Activated T-helper 1 cell treated with anti-CD3 and anti-CD28 coated beads, Interleukin-12 subunit alpha, Interleukin-12 subunit beta, Interleukin-2, Interleukin-4 antibody, amounts not matched to agents 30 ng/mL and 10 ng/mL and 1 ng/mL, durations not matched to agents 14 hours and 24 hours and 36 hours (primary cell): ENCODE measurements at regions of chr1 and their contacts with region 1.

Region 1: DNA sequence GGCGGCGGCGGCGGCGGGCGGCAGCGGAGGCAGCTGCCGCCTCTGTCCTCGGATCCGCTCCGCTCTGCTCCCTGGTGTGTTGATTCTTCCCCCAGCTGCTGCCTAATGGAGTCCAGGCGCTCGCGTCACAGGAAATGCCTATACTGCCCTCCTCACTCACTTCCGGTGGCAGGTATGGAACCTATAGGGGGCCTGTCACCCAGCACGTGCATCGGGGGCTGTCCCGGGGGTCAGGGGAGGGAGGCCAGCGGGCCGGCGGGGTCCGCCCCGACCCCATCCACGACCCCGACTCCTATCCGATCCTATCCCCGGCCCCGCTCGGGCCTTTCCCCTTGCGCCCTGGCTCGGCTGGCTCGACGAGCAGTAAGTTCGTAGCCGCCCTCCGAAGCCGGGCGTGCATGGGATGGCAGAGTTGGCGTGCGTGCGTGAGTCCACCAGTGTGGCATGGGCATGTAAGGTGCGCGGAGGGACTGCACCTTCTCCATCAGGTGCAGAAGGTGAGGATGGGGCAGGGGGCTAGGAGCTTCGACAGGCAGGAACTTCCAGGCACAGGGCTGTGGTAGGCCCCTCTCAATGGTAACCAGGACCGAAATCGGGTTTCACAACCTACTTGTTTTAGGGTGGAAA is at the start of gene WDR26:
- DNase-seq: peak; percentile 83
- H3K4me3 Mint-ChIP-seq: peak within 1 kb of the TSS; percentile 92
- H3K27ac Mint-ChIP-seq: peak within 1 kb of the TSS; percentile 95
- H3K4me1 Mint-ChIP-seq: peaks cover 53% of the 10 kb centered on the region
- H3K27me3 Mint-ChIP-seq: no peaks in the 10 kb centered on the region
- total RNA-seq, gene WDR26: 91.6 and 95.8 TPM in 2 replicates

Region 2: DNA sequence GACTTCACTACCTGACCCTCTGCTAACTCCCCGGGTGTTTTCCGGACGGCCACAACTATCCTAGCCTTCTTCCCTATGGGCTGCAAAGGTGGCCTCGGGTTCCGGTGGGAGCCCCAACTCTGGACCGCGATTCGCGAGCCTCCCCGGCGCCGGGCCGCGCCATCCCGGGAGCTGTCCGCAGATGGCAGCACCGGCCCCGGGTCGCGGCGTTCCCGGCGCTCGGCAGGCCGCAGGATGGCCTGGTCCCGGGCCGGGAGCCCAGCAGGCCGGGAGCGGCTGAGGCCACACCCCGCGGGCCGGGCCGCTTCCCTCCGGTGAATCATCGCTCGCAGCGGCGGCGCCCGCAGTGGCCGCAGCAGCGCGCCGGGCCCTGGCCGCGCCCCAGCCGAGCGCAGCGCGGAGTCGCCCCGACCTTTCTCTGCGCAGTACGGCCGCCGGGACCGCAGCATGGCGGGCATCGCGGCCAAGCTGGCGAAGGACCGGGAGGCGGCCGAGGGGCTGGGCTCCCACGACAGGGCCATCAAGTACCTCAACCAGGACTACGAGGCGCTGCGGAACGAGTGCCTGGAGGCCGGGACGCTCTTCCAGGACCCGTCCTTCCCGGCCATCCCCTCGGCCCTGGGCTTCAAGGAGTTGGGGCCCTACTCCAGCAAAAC is 722.5 kb before region 1 on chr1 and contains the start of gene CAPN2:
- intact Hi-C with region 1: loop called (anchors 10 kb)
- DNase-seq: peak; percentile 58
- H3K4me3 Mint-ChIP-seq: peak within 1 kb of the TSS; percentile 80
- H3K27ac Mint-ChIP-seq: peak within 1 kb of the TSS; percentile 88
- H3K4me1 Mint-ChIP-seq: peaks cover 62% of the 10 kb centered on the region
- H3K27me3 Mint-ChIP-seq: peaks cover 2% of the 10 kb centered on the region
- total RNA-seq, gene CAPN2: 66.3 and 70.4 TPM in 2 replicates

Region 3: GRCh38 chr1:224168859-224169380 is 265.9 kb before region 1 on chr1:
- intact Hi-C with region 1: loop called (anchors 5 kb)
- DNase-seq: peak; percentile 59
- H3K4me3 Mint-ChIP-seq: peak overlapping the region; percentile 60
- H3K27ac Mint-ChIP-seq: peak overlapping the region; percentile 76
- H3K4me1 Mint-ChIP-seq: peaks cover 38% of the 10 kb centered on the region
- H3K27me3 Mint-ChIP-seq: peaks cover 2% of the 10 kb centered on the region

Region 4: GRCh38 chr1:224312025-224312424 is 122.8 kb before region 1 on chr1:
- intact Hi-C with region 1: no loop called
- DNase-seq: no peak
- H3K4me3 Mint-ChIP-seq: no peak overlapping the region
- H3K27ac Mint-ChIP-seq: no peak overlapping the region
- H3K4me1 Mint-ChIP-seq: no peaks in the 10 kb centered on the region
- H3K27me3 Mint-ChIP-seq: no peaks in the 10 kb centered on the region

Region 5: DNA sequence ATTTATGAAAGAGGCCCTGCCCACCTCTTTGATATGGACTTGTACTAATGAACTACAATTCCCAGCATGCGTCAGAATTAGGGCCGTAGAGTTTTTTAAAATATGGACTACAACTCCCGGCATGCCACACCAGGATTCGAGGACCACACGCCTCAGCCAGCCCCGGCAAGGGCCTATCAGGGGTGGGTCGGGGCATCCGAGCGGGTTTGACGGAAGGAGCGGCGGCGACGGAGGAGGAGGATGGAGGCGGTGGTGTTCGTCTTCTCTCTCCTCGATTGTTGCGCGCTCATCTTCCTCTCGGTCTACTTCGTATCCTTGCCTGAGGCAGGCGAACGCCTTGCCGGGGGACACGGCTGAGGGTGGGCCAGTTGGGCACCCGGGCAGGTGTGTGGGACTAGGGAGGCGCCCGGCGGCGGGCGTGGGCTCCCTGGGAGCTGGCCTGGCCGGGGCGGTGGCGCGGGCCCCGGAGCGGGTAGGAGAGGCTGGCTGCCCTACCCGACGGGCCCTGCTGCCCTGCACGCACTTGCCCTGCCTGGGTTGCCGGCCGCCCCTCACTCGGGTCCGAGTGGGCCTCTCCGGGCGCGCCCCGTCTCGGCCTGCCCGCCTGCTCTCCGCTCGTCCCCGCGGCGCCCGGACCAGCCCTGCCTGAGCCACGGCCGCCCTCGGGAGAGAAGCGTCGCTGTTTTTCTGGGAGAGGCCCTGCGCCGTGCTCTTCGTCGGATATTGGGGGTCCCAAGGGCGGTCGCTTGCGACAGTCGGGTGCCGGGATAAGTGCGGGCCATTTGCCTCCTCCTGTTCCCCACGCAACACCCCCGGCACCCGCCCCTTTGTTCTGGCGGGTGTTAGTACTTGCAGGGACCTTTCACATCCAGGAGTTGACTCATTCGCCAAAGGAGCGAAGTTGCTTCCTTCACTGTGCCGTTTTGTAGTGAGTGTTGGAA is 77.8 kb before region 1 on chr1 and contains the start of gene CNIH4:
- intact Hi-C with region 1: loop called (anchors 1 kb)
- DNase-seq: peak; percentile 89
- H3K4me3 Mint-ChIP-seq: peak within 1 kb of the TSS; percentile 93
- H3K27ac Mint-ChIP-seq: peak within 1 kb of the TSS; percentile 93
- H3K4me1 Mint-ChIP-seq: peaks cover 28% of the 10 kb centered on the region
- H3K27me3 Mint-ChIP-seq: no peaks in the 10 kb centered on the region
- total RNA-seq, gene CNIH4: 80.7 and 82.3 TPM in 2 replicates

Region 6: DNA sequence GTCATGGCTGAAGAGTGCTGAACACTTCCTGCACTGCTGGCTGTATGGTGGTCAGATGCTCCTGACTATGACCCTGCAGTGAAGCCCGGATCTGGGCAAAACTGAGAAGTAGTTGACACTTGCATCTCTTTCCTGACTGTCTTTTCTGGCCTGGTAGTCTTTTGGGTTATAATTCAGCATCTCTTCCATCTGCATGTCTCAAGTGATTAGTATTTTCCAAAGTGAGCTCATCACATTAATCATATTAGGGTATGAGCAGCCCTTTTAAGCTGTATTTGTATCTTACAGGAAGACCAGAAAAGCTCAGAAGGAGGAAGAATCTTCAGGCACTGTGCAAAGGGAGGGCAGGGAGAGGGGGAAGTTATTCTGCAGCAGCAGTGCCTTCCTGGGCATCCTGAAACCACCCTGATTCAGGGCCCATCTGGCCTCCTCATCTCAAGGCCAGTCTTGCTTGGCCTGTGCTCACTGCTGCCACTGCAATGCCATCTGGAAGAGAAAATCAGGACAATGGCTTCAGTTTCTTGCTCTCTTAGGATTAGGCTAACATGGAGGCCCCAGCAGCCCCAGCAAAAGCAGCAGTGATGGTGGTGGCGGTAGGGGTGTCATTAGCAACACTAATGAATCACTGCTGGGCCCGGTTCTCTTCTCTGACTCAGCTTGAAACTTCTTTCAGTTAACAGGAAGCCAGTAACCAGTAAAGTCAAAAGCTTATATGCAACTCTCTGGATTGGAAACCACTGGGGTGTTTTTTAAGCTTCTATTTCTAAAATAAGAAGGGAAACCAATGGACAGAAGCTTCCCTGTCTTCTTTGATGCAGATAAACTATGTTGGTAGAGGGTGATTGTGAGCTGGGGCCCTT is 63.1 kb after region 1 on chr1:
- intact Hi-C with region 1: loop called (anchors 1 kb)
- DNase-seq: peak; percentile 62
- H3K4me3 Mint-ChIP-seq: peak overlapping the region; percentile 59
- H3K27ac Mint-ChIP-seq: peak overlapping the region; percentile 97
- H3K4me1 Mint-ChIP-seq: peaks cover 63% of the 10 kb centered on the region
- H3K27me3 Mint-ChIP-seq: peaks cover 3% of the 10 kb centered on the region